ENCODE measurements at regions of chr3 and their contacts with region 1.

Region 1: DNA sequence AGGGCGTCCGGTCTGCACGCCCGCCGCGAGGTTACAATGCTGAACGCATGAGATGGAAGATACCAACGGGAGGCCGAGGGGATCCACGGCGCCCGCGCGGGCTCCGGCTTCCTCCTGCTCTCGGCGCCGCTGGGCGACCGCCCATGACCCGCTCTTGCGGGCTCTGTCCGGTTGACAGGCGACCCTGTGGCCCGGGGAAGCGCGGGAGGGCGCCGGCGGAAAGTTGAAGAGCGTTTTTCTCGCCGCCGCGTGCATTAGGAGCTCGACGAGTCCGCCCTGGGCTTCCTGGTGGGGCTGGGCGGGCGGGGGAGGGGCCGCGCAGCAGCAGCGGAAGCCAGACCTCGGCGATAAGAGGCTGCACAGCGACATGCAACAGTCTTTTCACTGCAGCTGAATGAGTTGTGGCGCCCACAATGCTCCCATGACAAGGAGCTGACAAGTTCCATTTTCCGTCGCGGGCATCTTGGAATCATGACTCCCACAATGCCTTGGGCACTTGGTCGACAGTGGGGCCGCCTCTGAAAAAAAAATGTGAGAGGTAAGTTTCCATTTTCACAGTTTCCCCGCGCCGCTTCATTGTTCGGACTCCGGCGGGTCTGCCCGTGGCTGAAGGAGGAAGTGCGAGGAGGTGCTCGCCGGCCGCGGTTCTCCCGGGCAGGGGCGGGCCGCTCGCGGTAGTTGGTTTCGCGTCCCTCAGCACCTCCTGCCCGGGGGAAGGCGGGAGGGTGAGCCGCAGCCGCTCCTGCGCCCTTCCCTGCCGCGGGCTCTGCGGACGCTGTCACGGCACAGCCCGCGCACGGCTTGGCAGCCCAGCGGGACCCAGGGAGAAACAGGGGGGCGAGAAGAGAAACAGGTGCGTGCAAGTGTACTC is at the start of gene MBNL1:
- DNase-seq: peak; percentile 79
- ATAC-seq: peak; percentile 73
- H3K4me3 Mint-ChIP-seq: peak within 1 kb of the TSS; percentile 98
- H3K27ac Mint-ChIP-seq: peak within 1 kb of the TSS; percentile 98
- H3K4me1 Mint-ChIP-seq: peaks cover 68% of the 10 kb centered on the region
- H3K27me3 Mint-ChIP-seq: no peaks in the 10 kb centered on the region
- CTCF ChIP-seq: no peak
- total RNA-seq, gene MBNL1: 489 and 561 TPM in 2 replicates

Region 2: DNA sequence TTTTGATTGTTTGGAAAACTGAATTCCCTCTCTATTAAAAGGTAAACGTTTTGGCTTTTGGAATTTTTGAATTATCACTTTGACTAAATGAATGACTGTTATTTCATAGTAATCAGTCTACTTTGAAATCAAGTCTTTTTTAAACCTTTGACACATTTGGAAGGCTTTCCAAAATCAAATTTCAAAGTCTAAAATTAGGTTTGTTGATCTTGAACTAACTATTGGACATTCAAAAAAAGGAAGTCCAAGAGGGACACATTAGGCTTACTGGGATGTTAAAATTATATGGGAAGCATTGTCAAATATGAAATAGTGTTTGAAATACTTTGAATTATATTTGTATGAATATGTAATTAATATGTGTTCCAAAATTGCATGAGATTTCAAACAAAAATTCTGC is 580.2 kb before region 1 on chr3:
- CTCF ChIA-PET with region 1: no interaction called
- POLR2A ChIA-PET with region 1: no interaction called
- intact Hi-C with region 1: no loop called
- DNase-seq: no peak
- ATAC-seq: no peak
- H3K4me3 Mint-ChIP-seq: no peak overlapping the region
- H3K27ac Mint-ChIP-seq: no peak overlapping the region
- H3K4me1 Mint-ChIP-seq: no peaks in the 10 kb centered on the region
- H3K27me3 Mint-ChIP-seq: no peaks in the 10 kb centered on the region
- CTCF ChIP-seq: no peak

Region 3: DNA sequence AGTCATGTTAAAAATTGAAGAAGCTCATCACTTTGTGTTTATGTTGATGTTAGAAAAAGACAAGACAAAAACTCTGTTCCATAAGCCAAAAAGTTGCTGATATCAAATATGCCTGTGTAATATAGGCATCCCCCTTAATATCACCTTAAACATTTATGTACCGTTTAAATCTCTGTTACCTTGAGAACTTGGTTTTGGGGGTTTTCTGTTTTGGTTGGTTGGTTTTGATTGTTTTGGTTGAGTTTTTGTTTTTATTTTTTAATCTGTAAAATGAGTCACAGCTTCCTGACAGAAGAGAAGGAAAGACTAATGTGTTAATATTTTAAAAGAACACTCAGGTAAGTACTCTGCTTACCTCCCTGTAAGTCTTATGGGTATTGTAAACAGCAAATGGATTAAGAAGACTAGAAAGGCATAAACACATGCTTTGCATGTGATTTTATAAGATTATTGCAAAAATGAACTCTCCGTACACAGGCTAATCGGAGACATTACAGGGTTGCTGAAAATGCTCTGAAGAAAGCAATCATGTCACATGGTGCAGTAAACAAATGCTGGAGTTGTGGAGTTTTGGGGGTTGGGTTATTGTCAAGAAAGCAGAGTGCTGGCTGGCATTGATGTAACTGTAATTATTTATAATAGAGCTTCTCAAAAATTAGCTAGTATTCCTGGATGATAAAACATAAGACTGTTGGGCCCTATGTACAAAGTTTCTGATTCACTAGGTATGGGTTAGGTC is 69.5 kb before region 1 on chr3:
- CTCF ChIA-PET with region 1: interaction called, 10 read pairs
- POLR2A ChIA-PET with region 1: interaction called, 185 read pairs
- intact Hi-C with region 1: loop called (anchors 1 kb)
- DNase-seq: no peak
- ATAC-seq: peak; percentile 10
- H3K4me3 Mint-ChIP-seq: peak overlapping the region; percentile 73
- H3K27ac Mint-ChIP-seq: peak overlapping the region; percentile 97
- H3K4me1 Mint-ChIP-seq: peaks cover 87% of the 10 kb centered on the region
- H3K27me3 Mint-ChIP-seq: no peaks in the 10 kb centered on the region
- CTCF ChIP-seq: no peak

Region 4: GRCh38 chr3:152235709-152236298 is 33.0 kb before region 1 on chr3:
- CTCF ChIA-PET with region 1: no interaction called
- POLR2A ChIA-PET with region 1: interaction called, 17 read pairs
- intact Hi-C with region 1: no loop called
- DNase-seq: no peak
- ATAC-seq: no peak
- H3K4me3 Mint-ChIP-seq: no peak overlapping the region
- H3K27ac Mint-ChIP-seq: no peak overlapping the region
- H3K4me1 Mint-ChIP-seq: peaks cover 68% of the 10 kb centered on the region
- H3K27me3 Mint-ChIP-seq: no peaks in the 10 kb centered on the region
- CTCF ChIP-seq: no peak

Region 5: GRCh38 chr3:152281133-152281713 is 12.4 kb after region 1 on chr3:
- CTCF ChIA-PET with region 1: no interaction called
- POLR2A ChIA-PET with region 1: interaction called, 32 read pairs
- intact Hi-C with region 1: loop called (anchors 1 kb)
- DNase-seq: no peak
- ATAC-seq: no peak
- H3K4me3 Mint-ChIP-seq: peak overlapping the region; percentile 8
- H3K27ac Mint-ChIP-seq: peak overlapping the region; percentile 7
- H3K4me1 Mint-ChIP-seq: peaks cover 86% of the 10 kb centered on the region
- H3K27me3 Mint-ChIP-seq: no peaks in the 10 kb centered on the region
- CTCF ChIP-seq: no peak

Region 6: GRCh38 chr3:152376351-152377183 is 107.8 kb after region 1 on chr3:
- CTCF ChIA-PET with region 1: no interaction called
- POLR2A ChIA-PET with region 1: interaction called, 19 read pairs
- intact Hi-C with region 1: loop called (anchors 1 kb)
- DNase-seq: peak; percentile 29
- ATAC-seq: peak; percentile 91
- H3K4me3 Mint-ChIP-seq: peak overlapping the region; percentile 51
- H3K27ac Mint-ChIP-seq: peak overlapping the region; percentile 84
- H3K4me1 Mint-ChIP-seq: peaks cover 83% of the 10 kb centered on the region
- H3K27me3 Mint-ChIP-seq: no peaks in the 10 kb centered on the region
- CTCF ChIP-seq: no peak

Region 7: GRCh38 chr3:154252759-154253638 is 1984.2 kb after region 1 on chr3:
- CTCF ChIA-PET with region 1: no interaction called
- POLR2A ChIA-PET with region 1: no interaction called
- intact Hi-C with region 1: no loop called
- DNase-seq: peak; percentile 47
- ATAC-seq: peak; percentile 79
- H3K4me3 Mint-ChIP-seq: no peak overlapping the region
- H3K27ac Mint-ChIP-seq: no peak overlapping the region
- H3K4me1 Mint-ChIP-seq: peaks cover 3% of the 10 kb centered on the region
- H3K27me3 Mint-ChIP-seq: no peaks in the 10 kb centered on the region
- CTCF ChIP-seq: peak; percentile 64

Measured in activated B cell treated with CpG ODN at 0.5 μM for 24 hours (primary cell).